ENCODE measurements at regions of chr4 and their contacts with region 1.

Region 1: GRCh38 chr4:87120411-87121199 is 99.8 kb downstream of the KLHL8 start:
- DNase-seq: peak; percentile 88
- H3K4me3 ChIP-seq: peak overlapping the region; percentile 20 to 44 (median 38)
- H3K27ac ChIP-seq: peak overlapping the region; percentile 86 to 88 (median 86)
- H3K4me1 ChIP-seq: peaks cover 0 to 76% (median 61%) of the 10 kb centered on the region in 4 donors
- H3K27me3 ChIP-seq: no peaks in the 10 kb centered on the region
- CTCF ChIP-seq: no peak
- EP300 ChIP-seq: no peak
- POLR2A ChIP-seq: peak; percentile 19 to 61

Region 2: GRCh38 chr4:87058356-87059073 is 62.1 kb before region 1 on chr4:
- intact Hi-C with region 1: loop called (anchors 5 kb)
- DNase-seq: no peak
- H3K4me3 ChIP-seq: no peak overlapping the region
- H3K27ac ChIP-seq: peak overlapping the region; percentile 68 to 84 (median 76)
- H3K4me1 ChIP-seq: peaks cover 0 to 94% (median 85%) of the 10 kb centered on the region in 4 donors
- H3K27me3 ChIP-seq: no peaks in the 10 kb centered on the region
- CTCF ChIP-seq: peak; percentile 11 to 36 (median 24)
- EP300 ChIP-seq: no peak
- POLR2A ChIP-seq: no peak

Region 3: DNA sequence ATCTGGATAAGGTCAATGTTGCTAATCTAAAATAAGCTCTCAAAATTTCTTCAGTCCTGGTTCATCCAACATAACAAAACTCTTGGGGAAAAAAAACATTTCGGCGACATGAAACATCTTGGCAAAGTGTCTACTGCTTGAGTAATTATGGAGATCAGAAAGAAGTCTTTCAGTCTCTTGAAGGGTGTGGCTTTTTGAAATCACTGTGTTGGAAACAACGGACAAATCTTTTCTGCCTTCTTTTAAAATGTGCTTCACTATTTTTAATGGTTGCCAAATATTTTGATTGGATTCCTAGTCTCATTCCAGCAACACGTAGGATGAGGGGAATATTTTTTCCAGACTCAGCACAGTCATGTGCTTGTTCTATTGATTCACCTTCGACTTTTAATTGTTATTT is 38.8 kb before region 1 on chr4:
- intact Hi-C with region 1: loop called (anchors 5 kb)
- DNase-seq: no peak
- H3K4me3 ChIP-seq: no peak overlapping the region
- H3K27ac ChIP-seq: peak overlapping the region; percentile 77 to 87 (median 85)
- H3K4me1 ChIP-seq: peaks cover 0 to 87% (median 72%) of the 10 kb centered on the region in 4 donors
- H3K27me3 ChIP-seq: no peaks in the 10 kb centered on the region
- CTCF ChIP-seq: no peak
- EP300 ChIP-seq: no peak
- POLR2A ChIP-seq: no peak

Region 4: DNA sequence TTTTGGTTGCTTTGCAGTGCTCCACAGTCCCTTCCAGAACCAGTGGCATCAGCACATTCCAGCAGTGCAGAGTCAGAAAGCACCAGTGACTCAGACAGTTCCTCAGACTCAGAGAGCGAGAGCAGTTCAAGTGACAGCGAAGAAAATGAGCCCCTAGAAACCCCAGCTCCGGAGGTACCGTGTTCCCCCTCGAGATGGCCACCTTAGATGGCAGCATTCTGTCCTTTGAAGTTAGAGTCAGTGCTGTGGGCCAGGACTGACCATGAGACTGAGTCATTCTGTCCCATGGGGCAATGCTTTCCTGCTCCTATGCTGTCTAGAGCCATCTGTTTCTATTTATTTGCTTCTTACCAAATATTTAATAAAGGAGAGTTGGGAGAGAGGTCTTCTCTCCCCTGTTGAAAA is 12.5 kb before region 1 on chr4:
- intact Hi-C with region 1: no loop called
- DNase-seq: peak; percentile 71
- H3K4me3 ChIP-seq: no peak overlapping the region
- H3K27ac ChIP-seq: peak overlapping the region; percentile 65 to 84 (median 74)
- H3K4me1 ChIP-seq: peaks cover 0 to 62% (median 41%) of the 10 kb centered on the region in 4 donors
- H3K27me3 ChIP-seq: no peaks in the 10 kb centered on the region
- CTCF ChIP-seq: no peak
- EP300 ChIP-seq: no peak
- POLR2A ChIP-seq: no peak